ENCODE measurements at regions of chr1 and their contacts with region 1.

Region 1: GRCh38 chr1:52056163-52056936 is at the start of gene BTF3L4:
- DNase-seq: peak; percentile 85 to 97
- H3K4me3 ChIP-seq: peak within 1 kb of the TSS; percentile 84 to 90
- H3K27ac ChIP-seq: peak within 1 kb of the TSS; percentile 91 to 95
- H3K4me1 ChIP-seq: peaks cover 3 to 17% of the 10 kb centered on the region in 2 donors
- H3K27me3 ChIP-seq: no peaks in the 10 kb centered on the region
- CTCF ChIP-seq: no peak
- total RNA-seq, gene BTF3L4: 39.9 TPM

Region 2: GRCh38 chr1:50959913-50960844 is 1096.2 kb before region 1 on chr1 and contains the start of gene FAF1:
- intact Hi-C with region 1: loop called (anchors 10 kb)
- DNase-seq: peak; percentile 83 to 98
- H3K4me3 ChIP-seq: peak within 1 kb of the TSS; percentile 92 to 94
- H3K27ac ChIP-seq: peak within 1 kb of the TSS; percentile 77 to 79
- H3K4me1 ChIP-seq: peaks cover 0 to 11% of the 10 kb centered on the region in 2 donors
- H3K27me3 ChIP-seq: no peaks in the 10 kb centered on the region
- CTCF ChIP-seq: peak in 1 of 3 experiments; percentile 25
- total RNA-seq, gene FAF1: 16.4 TPM

Region 3: DNA sequence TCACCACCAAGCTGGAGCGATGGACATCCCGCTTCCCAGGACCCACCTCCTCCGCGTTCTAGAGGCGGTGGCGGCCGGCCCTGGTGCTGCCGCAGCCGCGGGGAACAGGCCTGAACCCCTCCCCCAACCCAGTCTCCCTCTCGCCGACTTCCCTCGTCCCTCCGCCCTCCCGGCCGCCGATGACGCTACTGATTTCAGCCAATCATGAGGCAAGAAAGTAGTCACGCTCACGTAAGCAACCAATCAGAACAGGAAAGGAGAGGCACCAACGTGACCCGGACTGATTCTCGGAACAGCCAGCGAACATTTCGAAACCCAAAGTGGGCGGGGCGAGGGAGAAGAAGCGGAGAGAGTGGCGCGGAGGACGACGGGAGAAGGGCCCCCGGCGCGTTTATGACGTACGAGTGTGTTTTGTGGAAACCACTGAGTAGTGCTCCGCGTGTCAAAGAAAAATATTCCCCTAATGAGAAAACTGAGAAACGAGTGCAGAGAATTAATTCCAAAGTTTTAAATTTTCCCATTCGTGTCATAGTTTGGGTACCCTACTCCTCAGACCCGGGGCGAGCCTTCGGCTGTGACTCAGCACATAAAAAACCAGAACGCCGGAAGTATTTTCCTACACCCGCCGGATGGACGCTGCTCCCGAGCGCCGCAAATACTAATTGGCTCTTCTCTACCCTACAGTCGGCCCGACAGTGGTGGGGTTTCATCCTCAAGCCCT is 177.6 kb before region 1 on chr1 and contains the start of gene NRDC:
- intact Hi-C with region 1: loop called (anchors 2 kb)
- DNase-seq: peak; percentile 99 to 100
- H3K4me3 ChIP-seq: peak within 1 kb of the TSS; percentile 71 to 83
- H3K27ac ChIP-seq: peak within 1 kb of the TSS; percentile 94 to 99
- H3K4me1 ChIP-seq: peaks cover 5 to 27% of the 10 kb centered on the region in 2 donors
- H3K27me3 ChIP-seq: no peaks in the 10 kb centered on the region
- CTCF ChIP-seq: no peak
- total RNA-seq, gene NRDC: 40.0 TPM

Region 4: DNA sequence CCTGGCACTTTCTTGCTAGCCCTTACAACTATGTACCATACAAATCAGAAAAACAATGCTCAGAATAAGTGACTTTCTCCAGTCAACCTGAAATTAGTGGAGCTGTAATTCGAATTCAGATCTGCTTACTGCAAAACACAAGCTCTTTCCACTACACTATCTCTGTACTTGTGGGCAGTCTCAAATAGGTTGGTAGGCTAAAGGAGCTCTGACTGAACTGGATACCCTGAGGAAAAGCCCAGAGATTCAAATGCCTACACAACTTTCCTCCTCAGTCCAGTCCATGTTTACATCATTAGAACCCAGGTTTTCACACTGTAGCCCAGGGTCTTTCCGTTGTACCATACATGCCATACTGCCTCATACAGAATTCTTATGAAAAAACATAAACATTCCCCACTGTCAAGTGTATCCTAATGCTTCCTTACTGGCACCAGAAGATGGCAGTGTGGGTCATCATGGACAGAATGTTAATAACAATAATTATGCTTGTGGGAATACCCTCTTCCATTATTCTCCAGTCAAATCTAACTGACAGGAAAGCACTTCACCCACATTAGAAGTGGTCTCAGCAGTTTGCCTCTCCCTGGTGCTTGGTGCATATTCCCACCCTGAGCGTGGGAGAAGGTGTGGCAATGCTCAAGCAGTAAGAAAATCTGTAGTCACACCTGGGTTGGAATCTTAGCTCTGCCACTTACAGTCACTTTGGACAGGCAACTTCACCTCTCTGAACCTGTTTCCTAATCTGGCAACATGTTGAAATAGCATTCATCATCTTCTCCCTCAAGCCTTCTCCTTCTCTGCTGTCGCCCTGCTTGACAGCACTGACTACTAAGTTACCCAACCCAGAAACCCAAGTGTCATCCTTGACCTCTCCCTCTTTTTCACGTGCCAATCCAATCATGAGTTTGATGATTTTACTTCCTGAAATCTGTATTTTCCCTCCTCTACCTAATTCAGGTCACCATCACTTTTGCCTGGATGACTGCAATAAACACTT is 71.1 kb after region 1 on chr1:
- intact Hi-C with region 1: no loop called
- DNase-seq: no peak
- H3K4me3 ChIP-seq: no peak overlapping the region
- H3K27ac ChIP-seq: no peak overlapping the region
- H3K4me1 ChIP-seq: no peaks in the 10 kb centered on the region
- H3K27me3 ChIP-seq: no peaks in the 10 kb centered on the region
- CTCF ChIP-seq: peak; percentile 50 to 83 (median 51)

Region 5: GRCh38 chr1:52365746-52366516 is 309.6 kb after region 1 on chr1 and contains the start of gene CC2D1B:
- intact Hi-C with region 1: loop called (anchors 5 kb)
- DNase-seq: peak; percentile 96 to 99
- H3K4me3 ChIP-seq: peak within 1 kb of the TSS; percentile 90 to 94
- H3K27ac ChIP-seq: peak within 1 kb of the TSS; percentile 92 to 96
- H3K4me1 ChIP-seq: peaks cover 2 to 14% of the 10 kb centered on the region in 2 donors
- H3K27me3 ChIP-seq: no peaks in the 10 kb centered on the region
- CTCF ChIP-seq: peak in 1 of 3 experiments; percentile 34
- total RNA-seq, gene CC2D1B: 45.4 TPM

Region 6: GRCh38 chr1:52702886-52703787 is 646.8 kb after region 1 on chr1:
- intact Hi-C with region 1: loop called (anchors 5 kb)
- DNase-seq: peak; percentile 85 to 95
- H3K4me3 ChIP-seq: peak overlapping the region; percentile 59
- H3K27ac ChIP-seq: peak overlapping the region; percentile 70 to 74
- H3K4me1 ChIP-seq: peaks cover 0 to 3% of the 10 kb centered on the region in 2 donors
- H3K27me3 ChIP-seq: no peaks in the 10 kb centered on the region
- CTCF ChIP-seq: no peak